Pancreas (tissue), 10 donors: ENCODE measurements at regions of chr2 and their contacts with region 1.

Region 1: GRCh38 chr2:16756831-16757644 is 91.4 kb upstream of the CYRIA start:
- DNase-seq: peak; percentile 48 to 86 (median 71)
- ATAC-seq: peak; percentile 81 to 98 (median 96)
- H3K4me3 ChIP-seq: no peak overlapping the region
- H3K27ac ChIP-seq: no peak overlapping the region
- H3K4me1 ChIP-seq: no peaks in the 10 kb centered on the region
- H3K27me3 ChIP-seq: no peaks in the 10 kb centered on the region
- CTCF ChIP-seq: peak; percentile 75 to 87 (median 84)

Region 2: GRCh38 chr2:16608661-16609643 is 148.1 kb before region 1 on chr2:
- intact Hi-C with region 1: loop called in 2 of 3 experiments (anchors 5 kb)
- DNase-seq: peak; percentile 60 to 94 (median 80)
- ATAC-seq: peak; percentile 86 to 98 (median 96)
- H3K4me3 ChIP-seq: peak overlapping the region in 3 of 4 donors; percentile 4 to 43 (median 27)
- H3K27ac ChIP-seq: peak overlapping the region in 1 of 4 donors; percentile 9
- H3K4me1 ChIP-seq: no peaks in the 10 kb centered on the region
- H3K27me3 ChIP-seq: no peaks in the 10 kb centered on the region
- CTCF ChIP-seq: peak; percentile 83 to 91 (median 90)

Region 3: GRCh38 chr2:17166506-17166905 is 409.5 kb after region 1 on chr2:
- intact Hi-C with region 1: no loop called
- DNase-seq: no peak
- ATAC-seq: peak in 2 of 4 donors; percentile 77 to 88
- H3K4me3 ChIP-seq: no peak overlapping the region
- H3K27ac ChIP-seq: no peak overlapping the region
- H3K4me1 ChIP-seq: no peaks in the 10 kb centered on the region
- H3K27me3 ChIP-seq: no peaks in the 10 kb centered on the region
- CTCF ChIP-seq: no peak